ENCODE measurements at regions of chr14 and their contacts with region 1.

Region 1: GRCh38 chr14:68283378-68284123 is 464.0 kb downstream of the RAD51B start:
- DNase-seq: peak; percentile 33
- H3K4me3 Mint-ChIP-seq: no peak overlapping the region
- H3K27ac Mint-ChIP-seq: peak overlapping the region; percentile 59
- H3K4me1 Mint-ChIP-seq: peaks cover 55% of the 10 kb centered on the region
- H3K27me3 Mint-ChIP-seq: no peaks in the 10 kb centered on the region

Region 2: GRCh38 chr14:68111097-68111852 is 172.3 kb before region 1 on chr14:
- intact Hi-C with region 1: no loop called
- DNase-seq: no peak
- H3K4me3 Mint-ChIP-seq: no peak overlapping the region
- H3K27ac Mint-ChIP-seq: no peak overlapping the region
- H3K4me1 Mint-ChIP-seq: peaks cover 11% of the 10 kb centered on the region
- H3K27me3 Mint-ChIP-seq: no peaks in the 10 kb centered on the region

Region 3: GRCh38 chr14:68312884-68313610 is 29.5 kb after region 1 on chr14:
- intact Hi-C with region 1: loop called (anchors 1 kb)
- DNase-seq: no peak
- H3K4me3 Mint-ChIP-seq: no peak overlapping the region
- H3K27ac Mint-ChIP-seq: no peak overlapping the region
- H3K4me1 Mint-ChIP-seq: peaks cover 26% of the 10 kb centered on the region
- H3K27me3 Mint-ChIP-seq: no peaks in the 10 kb centered on the region

Region 4: GRCh38 chr14:68718023-68718995 is 434.8 kb after region 1 on chr14:
- intact Hi-C with region 1: loop called (anchors 10 kb)
- DNase-seq: no peak
- H3K4me3 Mint-ChIP-seq: no peak overlapping the region
- H3K27ac Mint-ChIP-seq: no peak overlapping the region
- H3K4me1 Mint-ChIP-seq: peaks cover 31% of the 10 kb centered on the region
- H3K27me3 Mint-ChIP-seq: no peaks in the 10 kb centered on the region

Measured in activated T-helper 2 cell treated with anti-CD3 and anti-CD28 coated beads, Interferon-gamma antibody, Interleukin-2, Interleukin-4, amounts not matched to agents 10 μg/mL and 5 μg/mL and 100 μg/mL, durations not matched to agents 14 hours and 24 hours and 36 hours (primary cell).